ENCODE measurements at regions of chr16 and their contacts with region 1.

Region 1: GRCh38 chr16:4183237-4184036 is 58.4 kb downstream of the SRL start:
- DNase-seq: peak; percentile 95 to 98
- ATAC-seq: peak; percentile 98
- H3K4me3 ChIP-seq: peak overlapping the region; percentile 13 to 54
- H3K27ac ChIP-seq: peak overlapping the region; percentile 36 to 72
- H3K4me1 ChIP-seq: no peaks in the 10 kb centered on the region
- H3K27me3 ChIP-seq: no peaks in the 10 kb centered on the region

Region 2: DNA sequence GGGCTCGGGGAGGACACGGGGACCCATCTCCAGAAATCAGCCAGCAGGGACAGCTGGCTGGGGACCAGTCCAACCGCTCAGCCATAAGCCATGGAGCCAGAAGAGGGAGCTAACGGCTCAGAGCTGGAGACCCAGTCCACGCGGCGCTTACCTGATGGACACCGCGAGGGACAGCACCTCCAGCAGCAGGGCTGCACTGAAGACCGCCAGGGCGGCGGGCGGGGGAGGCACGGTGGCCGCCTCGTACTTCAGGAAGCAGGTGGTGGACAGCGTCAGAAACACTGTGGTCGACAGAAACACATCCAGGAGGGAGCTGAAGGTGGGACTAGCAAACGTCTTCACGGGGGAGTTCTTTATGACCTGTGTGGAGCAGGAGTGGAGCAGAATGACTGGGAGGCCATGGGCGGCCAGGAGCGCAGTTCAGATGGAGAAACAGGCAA is 200.3 kb before region 1 on chr16:
- intact Hi-C with region 1: loop called in 1 of 2 experiments (anchors 10 kb)
- DNase-seq: peak in 1 of 2 donors; percentile 77
- ATAC-seq: peak; percentile 72
- H3K4me3 ChIP-seq: no peak overlapping the region
- H3K27ac ChIP-seq: no peak overlapping the region
- H3K4me1 ChIP-seq: no peaks in the 10 kb centered on the region
- H3K27me3 ChIP-seq: no peaks in the 10 kb centered on the region

Region 3: GRCh38 chr16:4064950-4065352 is 118.5 kb before region 1 on chr16:
- intact Hi-C with region 1: no loop called
- DNase-seq: no peak
- ATAC-seq: no peak
- H3K4me3 ChIP-seq: no peak overlapping the region
- H3K27ac ChIP-seq: no peak overlapping the region
- H3K4me1 ChIP-seq: no peaks in the 10 kb centered on the region
- H3K27me3 ChIP-seq: no peaks in the 10 kb centered on the region

Region 4: DNA sequence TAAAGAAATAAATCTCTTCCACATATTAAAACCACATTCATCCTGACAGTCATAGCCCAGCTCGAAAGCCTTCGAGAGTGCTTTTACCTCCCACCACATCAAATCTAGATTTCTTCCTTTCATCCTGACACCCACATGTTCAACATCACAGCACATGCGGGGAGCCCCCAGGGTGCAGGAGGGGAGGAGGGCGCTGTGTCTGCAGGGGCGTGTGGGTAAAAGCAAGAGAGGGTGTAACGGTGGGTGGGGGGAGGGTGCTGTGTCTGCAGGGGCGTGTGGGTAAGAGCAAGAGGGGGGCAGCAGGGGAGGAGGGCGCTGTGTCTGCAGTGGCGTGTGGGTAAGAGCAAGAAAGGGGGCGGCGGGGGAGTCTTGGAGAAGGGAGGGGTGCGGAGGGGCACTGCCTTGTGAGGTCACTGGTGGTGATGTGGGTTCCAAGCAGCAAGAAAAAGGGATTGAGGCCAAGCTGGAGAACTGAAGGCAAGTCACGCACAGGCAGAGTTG is 101.9 kb before region 1 on chr16:
- intact Hi-C with region 1: no loop called
- DNase-seq: no peak
- ATAC-seq: peak; percentile 11
- H3K4me3 ChIP-seq: no peak overlapping the region
- H3K27ac ChIP-seq: peak overlapping the region in 1 of 2 donors; percentile 9
- H3K4me1 ChIP-seq: peaks cover 0 to 3% of the 10 kb centered on the region in 2 donors
- H3K27me3 ChIP-seq: no peaks in the 10 kb centered on the region